Right cardiac atrium (tissue), 5 donors: ENCODE measurements at regions of chr12 and their contacts with region 1.

Region 1: GRCh38 chr12:19186722-19187661 is 57.5 kb downstream of the PLEKHA5 start:
- DNase-seq: no peak
- ATAC-seq: peak in 1 of 2 donors; percentile 18
- H3K4me3 ChIP-seq: peak overlapping the region; percentile 14
- H3K27ac ChIP-seq: peak overlapping the region; percentile 58
- H3K4me1 ChIP-seq: peaks cover 6% of the 10 kb centered on the region
- H3K27me3 ChIP-seq: no peaks in the 10 kb centered on the region

Region 2: GRCh38 chr12:18430425-18431048 is 756.5 kb before region 1 on chr12:
- intact Hi-C with region 1: loop called in 2 of 4 experiments (anchors 10 kb)
- DNase-seq: peak; percentile 15 to 52 (median 48)
- ATAC-seq: peak; percentile 83 to 86
- H3K4me3 ChIP-seq: no peak overlapping the region
- H3K27ac ChIP-seq: no peak overlapping the region
- H3K4me1 ChIP-seq: no peaks in the 10 kb centered on the region
- H3K27me3 ChIP-seq: no peaks in the 10 kb centered on the region

Region 3: GRCh38 chr12:18861287-18861858 is 325.6 kb before region 1 on chr12:
- intact Hi-C with region 1: loop called in 3 of 4 experiments (anchors 5 to 10 kb)
- DNase-seq: no peak
- ATAC-seq: no peak
- H3K4me3 ChIP-seq: no peak overlapping the region
- H3K27ac ChIP-seq: no peak overlapping the region
- H3K4me1 ChIP-seq: no peaks in the 10 kb centered on the region
- H3K27me3 ChIP-seq: no peaks in the 10 kb centered on the region

Region 4: GRCh38 chr12:19129486-19130223 is 57.3 kb before region 1 on chr12 and contains the start of gene PLEKHA5:
- intact Hi-C with region 1: loop called in 2 of 4 experiments (anchors 5 to 10 kb)
- DNase-seq: peak; percentile 79 to 93 (median 92)
- ATAC-seq: peak; percentile 96
- H3K4me3 ChIP-seq: peak within 1 kb of the TSS; percentile 98
- H3K27ac ChIP-seq: peak within 1 kb of the TSS; percentile 94
- H3K4me1 ChIP-seq: no peaks in the 10 kb centered on the region
- H3K27me3 ChIP-seq: no peaks in the 10 kb centered on the region
- total RNA-seq, gene PLEKHA5: 51.0 to 88.0 (median 74.8) TPM

Region 5: GRCh38 chr12:19288603-19289244 is 101.7 kb after region 1 on chr12:
- intact Hi-C with region 1: loop called in 2 of 4 experiments (anchors 10 kb)
- DNase-seq: no peak
- ATAC-seq: peak in 1 of 2 donors; percentile 43
- H3K4me3 ChIP-seq: no peak overlapping the region
- H3K27ac ChIP-seq: no peak overlapping the region
- H3K4me1 ChIP-seq: no peaks in the 10 kb centered on the region
- H3K27me3 ChIP-seq: no peaks in the 10 kb centered on the region